MCF 10A (cell line): ENCODE measurements at regions of chr15 and their contacts with region 1.

Region 1: GRCh38 chr15:42920519-42921227 is at the start of gene TTBK2:
- DNase-seq: peak; percentile 98
- H3K4me3 Mint-ChIP-seq: peak within 1 kb of the TSS; percentile 85
- H3K27ac Mint-ChIP-seq: peak within 1 kb of the TSS; percentile 74
- H3K4me1 Mint-ChIP-seq: peaks cover 6% of the 10 kb centered on the region
- H3K27me3 Mint-ChIP-seq: no peaks in the 10 kb centered on the region
- CTCF ChIP-seq: no peak
- total RNA-seq, gene TTBK2: 25.5 and 26.8 TPM in 2 replicates

Region 2: GRCh38 chr15:42704492-42704926 is 216.2 kb before region 1 on chr15:
- CTCF ChIA-PET with region 1: interaction called, 13 read pairs
- POLR2A ChIA-PET with region 1: interaction called, 3 read pairs
- intact Hi-C with region 1: no loop called
- DNase-seq: peak; percentile 83
- H3K4me3 Mint-ChIP-seq: no peak overlapping the region
- H3K27ac Mint-ChIP-seq: no peak overlapping the region
- H3K4me1 Mint-ChIP-seq: peaks cover 6% of the 10 kb centered on the region
- H3K27me3 Mint-ChIP-seq: no peaks in the 10 kb centered on the region
- CTCF ChIP-seq: peak; percentile 88

Region 3: DNA sequence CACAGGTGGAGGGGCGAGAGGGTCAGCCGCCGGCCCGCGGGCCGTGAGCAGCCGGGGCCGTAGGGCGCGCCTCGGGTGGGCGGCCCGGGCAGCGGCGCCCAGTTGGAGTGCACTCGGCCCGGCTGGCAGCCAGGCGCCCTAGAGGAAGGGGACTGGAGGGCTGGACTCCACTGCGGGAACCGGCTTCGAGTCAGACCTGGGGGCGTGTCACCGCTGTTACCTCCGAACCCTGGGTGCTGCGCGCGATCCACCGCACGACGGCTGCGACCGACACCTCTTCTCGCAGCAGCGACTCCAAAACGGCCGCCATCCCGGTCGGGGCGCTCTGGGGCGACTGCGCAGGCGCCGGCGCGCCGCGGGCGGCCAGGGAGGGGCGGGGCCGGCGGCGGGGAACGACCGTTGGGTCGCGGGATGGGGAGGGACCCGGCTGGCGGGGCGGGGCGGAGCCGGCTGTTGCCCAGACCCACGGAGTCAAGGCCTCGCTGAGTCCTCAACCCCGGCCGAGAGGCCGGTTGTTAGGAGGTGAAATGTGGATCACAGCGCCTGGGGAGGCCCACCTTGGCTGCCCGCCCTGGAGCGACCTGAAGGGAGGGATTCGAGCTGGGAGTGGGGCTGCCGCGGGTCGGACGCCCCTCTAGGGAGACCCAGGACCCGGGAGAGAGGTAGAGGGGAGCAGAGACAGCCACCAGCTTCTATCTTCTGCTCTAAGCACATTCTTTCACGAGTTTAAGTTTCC is 183.7 kb before region 1 on chr15 and contains the start of gene CDAN1:
- CTCF ChIA-PET with region 1: interaction called, 24 read pairs
- POLR2A ChIA-PET with region 1: interaction called, 3 read pairs
- intact Hi-C with region 1: no loop called
- DNase-seq: peak; percentile 81
- H3K4me3 Mint-ChIP-seq: peak within 1 kb of the TSS; percentile 75
- H3K27ac Mint-ChIP-seq: peak within 1 kb of the TSS; percentile 12
- H3K4me1 Mint-ChIP-seq: no peaks in the 10 kb centered on the region
- H3K27me3 Mint-ChIP-seq: no peaks in the 10 kb centered on the region
- CTCF ChIP-seq: no peak
- total RNA-seq, gene CDAN1: 9.5 and 14.8 TPM in 2 replicates

Region 4: DNA sequence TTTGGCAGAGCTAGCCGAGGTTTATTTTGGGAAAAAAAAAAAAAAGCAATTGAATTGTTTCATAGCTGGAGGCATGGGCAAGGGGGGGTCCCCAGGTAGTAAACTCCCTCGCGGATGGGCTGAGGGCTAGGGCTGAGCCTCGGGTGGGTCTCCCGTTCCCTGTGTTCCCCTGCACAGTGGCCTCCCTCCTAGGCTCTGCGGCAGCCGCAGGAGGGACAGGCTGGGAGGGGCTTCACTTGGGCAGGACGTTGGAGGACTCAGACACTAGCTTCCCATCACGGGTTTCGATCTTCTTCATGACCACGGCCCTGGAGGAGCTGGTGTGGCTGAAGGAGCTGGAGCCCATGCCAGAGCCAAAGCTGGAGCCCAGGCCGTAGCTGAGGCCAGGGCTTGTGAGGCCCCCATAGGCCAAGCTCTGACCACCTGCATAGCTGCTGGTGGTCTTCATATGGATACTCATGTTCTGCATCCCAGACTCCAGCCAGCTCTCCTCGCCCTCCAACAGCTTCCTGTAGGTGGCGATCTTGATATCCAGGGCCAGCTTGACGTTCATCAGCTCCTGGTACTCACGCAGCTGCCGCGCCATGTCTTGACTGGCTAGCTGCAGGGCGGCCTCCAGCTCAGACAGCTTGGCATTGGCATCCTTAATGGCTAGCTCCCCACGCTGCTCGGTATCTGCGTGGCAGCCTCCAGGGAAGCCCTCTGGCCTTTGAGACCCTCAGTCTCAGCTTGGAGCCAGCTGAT is 119.8 kb before region 1 on chr15:
- CTCF ChIA-PET with region 1: interaction called, 10 read pairs
- POLR2A ChIA-PET with region 1: no interaction called
- intact Hi-C with region 1: no loop called
- DNase-seq: no peak
- H3K4me3 Mint-ChIP-seq: no peak overlapping the region
- H3K27ac Mint-ChIP-seq: no peak overlapping the region
- H3K4me1 Mint-ChIP-seq: peaks cover 4% of the 10 kb centered on the region
- H3K27me3 Mint-ChIP-seq: no peaks in the 10 kb centered on the region
- CTCF ChIP-seq: no peak

Region 5: GRCh38 chr15:42832577-42832976 is 88.1 kb before region 1 on chr15:
- CTCF ChIA-PET with region 1: no interaction called
- POLR2A ChIA-PET with region 1: interaction called, 6 read pairs
- intact Hi-C with region 1: loop called (anchors 10 kb)
- DNase-seq: peak; percentile 93
- H3K4me3 Mint-ChIP-seq: no peak overlapping the region
- H3K27ac Mint-ChIP-seq: peak overlapping the region; percentile 57
- H3K4me1 Mint-ChIP-seq: peaks cover 6% of the 10 kb centered on the region
- H3K27me3 Mint-ChIP-seq: no peaks in the 10 kb centered on the region
- CTCF ChIP-seq: no peak

Region 6: DNA sequence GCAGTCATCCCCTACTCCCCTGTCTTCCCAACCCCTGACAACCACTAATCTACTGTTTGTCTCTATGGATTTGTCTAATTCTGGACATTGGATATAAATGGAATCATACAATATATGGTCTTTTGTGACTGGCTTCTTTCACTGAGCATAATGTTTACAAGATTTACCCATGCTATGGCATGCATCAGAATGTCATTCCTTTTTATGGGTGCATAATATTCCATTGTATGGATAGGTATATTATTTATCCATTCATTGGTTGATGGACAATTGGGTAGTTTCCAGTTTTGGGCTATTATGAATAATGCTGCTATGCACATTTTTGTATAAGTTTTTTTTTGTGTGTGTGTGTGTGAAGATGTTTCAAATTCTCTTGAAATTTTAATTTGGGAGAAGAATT is 16.5 kb after region 1 on chr15:
- CTCF ChIA-PET with region 1: interaction called, 22 read pairs
- POLR2A ChIA-PET with region 1: no interaction called
- intact Hi-C with region 1: no loop called
- DNase-seq: no peak
- H3K4me3 Mint-ChIP-seq: no peak overlapping the region
- H3K27ac Mint-ChIP-seq: no peak overlapping the region
- H3K4me1 Mint-ChIP-seq: no peaks in the 10 kb centered on the region
- H3K27me3 Mint-ChIP-seq: no peaks in the 10 kb centered on the region
- CTCF ChIP-seq: no peak

Region 7: GRCh38 chr15:43346305-43346704 is 425.6 kb after region 1 on chr15:
- CTCF ChIA-PET with region 1: no interaction called
- POLR2A ChIA-PET with region 1: no interaction called
- intact Hi-C with region 1: no loop called
- DNase-seq: peak; percentile 11
- H3K4me3 Mint-ChIP-seq: no peak overlapping the region
- H3K27ac Mint-ChIP-seq: no peak overlapping the region
- H3K4me1 Mint-ChIP-seq: no peaks in the 10 kb centered on the region
- H3K27me3 Mint-ChIP-seq: no peaks in the 10 kb centered on the region
- CTCF ChIP-seq: no peak